Caki2 (cell line): ENCODE measurements at regions of chr3 and their contacts with region 1.

Region 1: DNA sequence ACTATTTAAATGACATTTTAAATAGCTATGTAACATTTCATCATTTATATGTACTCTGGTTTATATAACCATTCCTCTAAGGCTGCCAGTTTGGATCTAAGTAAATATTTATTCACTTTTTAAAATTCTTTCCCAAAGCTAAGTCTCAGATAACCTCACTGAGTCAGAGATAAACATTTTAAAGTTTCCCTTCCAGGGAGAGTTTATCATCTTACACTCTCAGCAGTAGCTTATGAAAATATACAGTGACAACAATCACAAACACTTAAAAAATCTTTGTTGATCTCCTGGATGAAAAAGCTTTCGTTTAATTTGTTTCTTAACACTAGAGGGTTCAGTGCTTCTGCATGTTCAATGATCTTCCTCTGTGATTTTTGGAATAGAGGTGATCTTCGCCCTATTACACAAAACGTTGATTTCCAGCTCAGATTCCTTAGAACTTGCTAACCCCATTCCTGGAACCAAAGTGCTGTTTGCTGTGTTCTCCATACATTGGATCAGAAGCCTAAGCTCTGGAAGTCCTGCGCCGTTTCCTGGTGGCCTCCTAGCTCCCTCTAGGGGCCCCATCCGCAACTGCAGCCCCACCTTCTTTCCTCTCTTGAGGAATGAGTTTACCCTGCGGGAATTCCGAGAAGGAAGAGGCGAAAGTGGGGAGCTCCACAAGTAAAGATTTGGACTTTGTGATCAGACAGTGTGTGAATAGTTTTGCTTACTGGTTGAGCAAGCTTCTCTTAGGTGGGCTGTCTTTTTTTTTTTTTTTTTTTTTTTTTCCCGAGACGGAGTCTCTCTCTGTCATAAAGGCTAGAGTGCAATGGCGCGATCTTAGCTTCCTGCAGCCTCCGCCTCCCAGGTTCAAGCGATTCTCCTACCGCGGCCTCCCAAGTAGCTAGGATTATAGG is 29.3 kb upstream of the SACM1L start:
- DNase-seq: peak; percentile 37

Region 2: GRCh38 chr3:45509768-45510129 is 150.2 kb before region 1 on chr3:
- in situ Hi-C with region 1: loop called (anchors 5 kb)
- DNase-seq: no peak

Region 3: DNA sequence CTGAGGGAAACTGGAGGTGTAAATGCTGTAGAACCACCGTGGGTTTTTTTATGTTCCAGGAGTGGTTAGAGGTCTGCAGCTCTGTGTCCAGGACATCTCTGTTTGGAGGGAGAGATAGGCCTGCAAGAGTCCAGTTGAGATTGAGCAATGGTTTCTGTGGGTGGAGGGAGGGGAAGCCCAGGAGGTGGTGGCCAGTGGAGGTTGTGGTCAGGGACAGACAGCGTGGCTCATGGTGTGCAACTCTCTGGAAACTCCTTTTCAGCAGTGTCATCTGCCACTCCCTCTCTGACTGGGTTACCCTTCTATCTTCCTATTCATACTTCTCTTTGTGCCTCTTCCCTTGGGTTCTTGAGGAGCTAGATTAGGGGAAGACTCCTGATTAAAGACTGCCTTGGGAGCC is 357.8 kb after region 1 on chr3:
- in situ Hi-C with region 1: no loop called
- DNase-seq: no peak